Esophagus muscularis mucosa (tissue), 4 donors: ENCODE measurements at regions of chr11 and their contacts with region 1.

Region 1: DNA sequence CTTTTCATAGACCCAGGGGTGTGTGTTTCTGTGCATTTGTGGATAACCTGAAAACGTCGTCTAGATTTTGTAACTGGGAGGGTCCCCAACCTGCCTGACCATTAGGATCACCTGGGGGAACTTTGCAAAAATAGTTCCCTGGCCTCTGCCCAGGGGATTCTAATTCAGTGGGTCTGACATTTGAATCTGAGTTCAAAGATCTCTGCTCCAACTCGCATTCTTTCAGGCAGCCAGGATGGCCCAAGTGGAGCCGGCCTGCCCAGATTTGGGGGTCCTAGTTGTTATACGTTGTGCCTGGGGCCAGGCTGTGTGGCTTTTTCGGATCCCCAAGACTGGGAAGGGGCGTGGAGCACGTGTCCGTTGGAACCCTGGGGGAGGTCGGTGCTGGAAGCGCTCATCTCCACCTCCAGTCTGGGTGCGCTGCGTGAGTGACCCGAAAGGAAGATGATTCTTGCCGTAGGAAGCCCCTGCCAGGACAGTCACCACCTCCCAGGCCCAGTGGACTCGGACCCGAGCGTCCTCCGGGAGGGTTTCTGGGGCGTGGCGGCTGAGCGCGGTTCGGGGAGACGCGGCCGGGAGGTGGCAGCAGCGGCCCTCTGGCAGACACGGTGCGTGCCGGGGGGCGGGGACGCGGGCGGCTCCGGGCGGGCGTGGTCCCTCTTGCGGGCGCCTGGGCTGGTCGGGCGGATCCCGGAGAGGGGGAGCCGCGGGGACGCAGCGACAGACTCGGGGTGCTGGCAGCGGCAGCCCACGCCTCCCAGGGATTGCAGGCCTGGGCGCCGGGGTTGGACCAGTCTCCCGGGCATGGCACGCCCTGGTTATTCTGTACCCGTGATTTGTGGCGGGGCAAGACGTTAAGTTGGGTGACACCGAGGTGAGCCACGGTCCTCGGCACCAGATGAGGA is 29.2 kb upstream of the PLET1 start:
- DNase-seq: peak; percentile 94
- H3K4me3 ChIP-seq: peak overlapping the region; percentile 66 to 69 (median 69)
- H3K27ac ChIP-seq: peak overlapping the region; percentile 74 to 85 (median 82)
- H3K4me1 ChIP-seq: peaks cover 17 to 51% (median 46%) of the 10 kb centered on the region in 4 donors
- H3K27me3 ChIP-seq: no peaks in the 10 kb centered on the region
- CTCF ChIP-seq: peak; percentile 92 to 95 (median 93)
- EP300 ChIP-seq: no peak
- POLR2A ChIP-seq: no peak

Region 2: GRCh38 chr11:112366777-112367176 is 76.9 kb after region 1 on chr11:
- intact Hi-C with region 1: loop called (anchors 2 kb)
- DNase-seq: no peak
- H3K4me3 ChIP-seq: no peak overlapping the region
- H3K27ac ChIP-seq: no peak overlapping the region
- H3K4me1 ChIP-seq: peaks cover 0 to 26% (median 24%) of the 10 kb centered on the region in 4 donors
- H3K27me3 ChIP-seq: no peaks in the 10 kb centered on the region
- CTCF ChIP-seq: no peak
- EP300 ChIP-seq: no peak
- POLR2A ChIP-seq: no peak

Region 3: DNA sequence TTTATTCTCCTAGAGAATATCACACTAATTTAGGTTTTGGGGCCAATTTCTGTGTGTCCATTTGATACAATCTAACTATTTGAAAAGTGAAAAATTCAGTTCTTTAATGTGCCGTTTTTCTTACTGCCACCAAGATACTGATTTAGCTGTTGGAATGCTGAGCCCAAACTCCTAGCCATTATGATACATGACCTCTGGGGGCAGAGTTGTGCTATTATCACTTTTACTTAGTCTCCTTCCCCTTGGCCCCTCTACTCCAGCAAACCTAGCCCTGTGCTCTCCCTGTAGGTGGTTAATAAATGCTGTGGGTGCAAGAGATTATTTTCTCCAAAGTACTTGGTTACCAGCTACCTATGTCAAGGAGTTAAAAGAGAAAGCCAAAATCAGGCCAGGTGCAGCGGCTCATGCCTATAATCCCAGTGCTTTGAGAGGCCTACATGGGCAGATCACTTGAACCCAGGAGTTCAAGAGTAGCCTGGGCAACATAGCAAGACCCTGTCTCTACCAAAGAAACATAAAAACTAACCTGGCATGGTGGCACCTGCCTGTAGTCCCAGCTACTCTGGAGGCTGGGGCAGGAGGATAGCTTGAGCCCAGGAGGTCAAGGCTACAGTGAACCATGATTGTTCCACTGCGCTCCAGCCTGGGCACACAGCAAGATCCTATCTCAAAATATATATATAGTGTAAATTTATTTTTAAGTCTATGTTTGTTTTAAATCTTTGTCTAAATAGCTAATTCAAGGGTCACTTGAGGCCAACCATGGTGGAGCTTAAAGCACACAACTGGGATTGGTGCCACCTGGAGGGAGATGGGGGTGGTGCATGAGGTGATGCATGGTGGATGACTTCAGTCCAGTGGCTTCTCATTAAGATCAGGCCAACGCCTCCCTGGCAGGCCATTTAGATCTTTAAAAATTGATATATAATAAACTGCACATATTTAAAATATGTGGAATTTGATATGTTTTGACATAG is 164.0 kb after region 1 on chr11:
- intact Hi-C with region 1: loop called (anchors 2 kb)
- DNase-seq: no peak
- H3K4me3 ChIP-seq: no peak overlapping the region
- H3K27ac ChIP-seq: no peak overlapping the region
- H3K4me1 ChIP-seq: no peaks in the 10 kb centered on the region
- H3K27me3 ChIP-seq: no peaks in the 10 kb centered on the region
- CTCF ChIP-seq: peak; percentile 33 to 61 (median 56)
- EP300 ChIP-seq: no peak
- POLR2A ChIP-seq: no peak

Region 4: GRCh38 chr11:112555491-112556364 is 265.9 kb after region 1 on chr11:
- intact Hi-C with region 1: loop called (anchors 5 kb)
- DNase-seq: no peak
- H3K4me3 ChIP-seq: no peak overlapping the region
- H3K27ac ChIP-seq: no peak overlapping the region
- H3K4me1 ChIP-seq: no peaks in the 10 kb centered on the region
- H3K27me3 ChIP-seq: no peaks in the 10 kb centered on the region
- CTCF ChIP-seq: peak; percentile 51 to 60 (median 53)
- EP300 ChIP-seq: no peak
- POLR2A ChIP-seq: no peak

Region 5: GRCh38 chr11:112588252-112588694 is 298.4 kb after region 1 on chr11:
- intact Hi-C with region 1: loop called (anchors 10 kb)
- DNase-seq: peak; percentile 92
- H3K4me3 ChIP-seq: no peak overlapping the region
- H3K27ac ChIP-seq: peak overlapping the region in 2 of 4 donors; percentile 32 to 49
- H3K4me1 ChIP-seq: peaks cover 3 to 42% (median 17%) of the 10 kb centered on the region in 4 donors
- H3K27me3 ChIP-seq: no peaks in the 10 kb centered on the region
- CTCF ChIP-seq: peak; percentile 69 to 77 (median 76)
- EP300 ChIP-seq: no peak
- POLR2A ChIP-seq: no peak

Region 6: DNA sequence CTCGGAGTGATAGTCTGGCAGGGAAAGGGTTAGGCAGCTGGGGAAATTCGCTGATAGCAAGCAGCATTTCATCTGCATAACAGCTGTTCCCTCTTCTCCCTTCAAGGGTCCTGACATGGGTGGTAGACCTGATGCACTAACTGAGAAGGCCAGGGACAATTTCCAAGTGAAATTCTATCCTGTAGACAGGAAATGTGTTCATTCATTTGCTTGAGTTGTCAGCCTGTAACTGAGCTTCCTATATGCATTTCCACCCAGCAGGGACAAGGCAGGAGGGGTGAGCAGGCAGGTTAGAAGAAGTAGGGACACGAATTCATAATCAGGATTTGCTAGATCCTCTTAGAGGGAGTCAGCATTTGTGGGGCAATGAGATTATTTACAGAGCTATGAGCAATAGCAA is 517.0 kb after region 1 on chr11:
- intact Hi-C with region 1: loop called (anchors 10 kb)
- DNase-seq: no peak
- H3K4me3 ChIP-seq: no peak overlapping the region
- H3K27ac ChIP-seq: no peak overlapping the region
- H3K4me1 ChIP-seq: peaks cover 3 to 51% (median 29%) of the 10 kb centered on the region in 4 donors
- H3K27me3 ChIP-seq: no peaks in the 10 kb centered on the region
- CTCF ChIP-seq: no peak
- EP300 ChIP-seq: no peak
- POLR2A ChIP-seq: no peak

Region 7: GRCh38 chr11:113289431-113290187 is 999.8 kb after region 1 on chr11:
- intact Hi-C with region 1: loop called (anchors 5 kb)
- DNase-seq: no peak
- H3K4me3 ChIP-seq: no peak overlapping the region
- H3K27ac ChIP-seq: no peak overlapping the region
- H3K4me1 ChIP-seq: peaks cover 0 to 8% (median 0%) of the 10 kb centered on the region in 4 donors
- H3K27me3 ChIP-seq: peaks cover 0 to 13% (median 0%) of the 10 kb centered on the region in 4 donors
- CTCF ChIP-seq: peak; percentile 85 to 95 (median 88)
- EP300 ChIP-seq: no peak
- POLR2A ChIP-seq: no peak